ENCODE measurements at regions of chr18 and their contacts with region 1.

Region 1: GRCh38 chr18:62982600-62983251 is 267.4 kb downstream of the PHLPP1 start:
- DNase-seq: peak in 3 of 6 donors; percentile 29 to 64 (median 56)
- ATAC-seq: peak; percentile 77 to 94 (median 87)
- H3K4me3 ChIP-seq: peak overlapping the region in 1 of 4 donors; percentile 29
- H3K27ac ChIP-seq: no peak overlapping the region
- H3K4me1 ChIP-seq: no peaks in the 10 kb centered on the region
- H3K27me3 ChIP-seq: no peaks in the 10 kb centered on the region
- CTCF ChIP-seq: peak; percentile 50 to 67 (median 58)

Region 2: DNA sequence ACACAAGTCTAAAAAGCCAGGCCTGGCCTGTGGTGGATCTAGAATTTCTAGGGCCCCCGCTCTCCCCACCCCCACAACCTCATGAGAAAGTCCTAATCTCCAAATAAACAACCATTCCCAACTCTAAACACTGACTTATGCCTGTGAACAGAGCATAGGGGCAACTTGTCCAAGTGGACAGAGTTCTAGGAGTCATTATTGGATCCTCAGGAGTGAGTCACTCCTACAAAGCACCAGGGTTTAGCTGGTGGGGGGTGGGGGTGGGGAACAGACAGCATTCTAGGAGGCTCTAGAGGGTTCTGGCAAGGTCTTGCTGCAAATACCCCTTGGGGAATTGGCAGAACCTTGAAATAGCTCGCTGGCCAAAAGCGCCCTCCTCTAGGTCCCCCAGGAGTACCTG is 376.6 kb before region 1 on chr18:
- intact Hi-C with region 1: loop called in 1 of 3 experiments (anchors 10 kb)
- DNase-seq: no peak
- ATAC-seq: no peak
- H3K4me3 ChIP-seq: no peak overlapping the region
- H3K27ac ChIP-seq: no peak overlapping the region
- H3K4me1 ChIP-seq: no peaks in the 10 kb centered on the region
- H3K27me3 ChIP-seq: no peaks in the 10 kb centered on the region
- CTCF ChIP-seq: no peak

Region 3: DNA sequence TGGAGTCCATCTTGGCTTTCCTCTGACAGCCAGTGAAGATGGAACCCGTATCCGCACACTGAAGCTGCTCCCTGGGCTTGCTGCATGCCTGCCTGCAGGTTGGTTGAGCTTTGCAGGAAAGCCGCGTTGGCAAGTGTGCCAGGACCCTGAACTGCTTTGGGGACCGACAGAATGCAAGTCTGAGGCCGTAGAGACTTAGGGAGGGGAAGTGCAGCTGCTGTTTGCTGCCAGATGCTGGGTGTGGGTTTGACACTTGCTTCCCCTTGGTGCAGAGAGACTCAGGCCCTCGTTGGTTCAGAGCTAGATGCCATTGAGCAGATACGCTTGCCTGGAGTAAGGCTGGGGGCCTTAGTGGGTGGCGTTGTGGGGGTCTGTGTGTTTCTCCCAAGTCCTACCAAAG is 280.5 kb before region 1 on chr18:
- intact Hi-C with region 1: loop called in 1 of 3 experiments (anchors 10 kb)
- DNase-seq: no peak
- ATAC-seq: no peak
- H3K4me3 ChIP-seq: no peak overlapping the region
- H3K27ac ChIP-seq: no peak overlapping the region
- H3K4me1 ChIP-seq: no peaks in the 10 kb centered on the region
- H3K27me3 ChIP-seq: no peaks in the 10 kb centered on the region
- CTCF ChIP-seq: no peak

Region 4: GRCh38 chr18:62714671-62715435 is 267.9 kb before region 1 on chr18:
- intact Hi-C with region 1: loop called in 1 of 3 experiments (anchors 5 kb)
- DNase-seq: peak; percentile 95 to 100 (median 100)
- ATAC-seq: peak; percentile 87 to 94 (median 89)
- H3K4me3 ChIP-seq: peak overlapping the region; percentile 45 to 75 (median 59)
- H3K27ac ChIP-seq: peak overlapping the region; percentile 87 to 95 (median 90)
- H3K4me1 ChIP-seq: peaks cover 9 to 20% (median 12%) of the 10 kb centered on the region in 3 donors
- H3K27me3 ChIP-seq: no peaks in the 10 kb centered on the region
- CTCF ChIP-seq: peak; percentile 21 to 66 (median 48)

Region 5: DNA sequence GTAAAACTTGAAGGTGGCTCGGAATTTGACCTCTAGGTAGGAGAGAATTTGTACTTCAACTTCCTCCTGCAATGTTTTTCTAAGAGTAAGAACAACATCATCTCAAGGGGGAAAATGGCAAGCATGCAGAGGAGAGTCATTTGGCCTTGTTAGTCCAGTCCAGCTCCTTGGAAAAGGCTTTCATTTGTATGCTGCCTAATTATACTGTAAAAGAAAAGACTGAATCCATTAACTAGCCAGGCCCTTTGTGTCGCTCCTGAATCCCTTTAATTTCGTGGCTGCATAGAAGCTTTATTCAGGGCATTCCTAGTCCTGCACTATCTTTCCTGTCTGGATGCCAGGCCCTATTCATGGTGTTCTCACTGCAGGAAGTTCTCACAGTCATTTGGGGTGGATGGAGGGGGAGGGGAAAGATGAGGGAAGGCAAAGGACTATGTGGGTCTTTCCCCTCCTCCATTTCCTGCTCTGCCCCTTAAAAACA is 231.3 kb before region 1 on chr18:
- intact Hi-C with region 1: no loop called
- DNase-seq: peak in 1 of 6 donors; percentile 23
- ATAC-seq: peak in 3 of 4 donors; percentile 60 to 74 (median 69)
- H3K4me3 ChIP-seq: no peak overlapping the region
- H3K27ac ChIP-seq: no peak overlapping the region
- H3K4me1 ChIP-seq: peaks cover 0 to 32% (median 28%) of the 10 kb centered on the region in 3 donors
- H3K27me3 ChIP-seq: no peaks in the 10 kb centered on the region
- CTCF ChIP-seq: no peak